Activated CD4-positive, alpha-beta memory T cell treated with anti-CD3 and anti-CD28 coated beads, Interleukin-2, amount 10 ng/mL, durations not matched to agents 7 days and 5 days (primary cell): ENCODE measurements at regions of chr4 and their contacts with region 1.

Region 1: GRCh38 chr4:140071806-140072205 is 82.2 kb downstream of the MAML3 start:
- DNase-seq: peak; percentile 80
- H3K4me3 Mint-ChIP-seq: peak overlapping the region; percentile 34
- H3K27ac Mint-ChIP-seq: peak overlapping the region; percentile 48
- H3K4me1 Mint-ChIP-seq: peaks cover 51% of the 10 kb centered on the region
- H3K27me3 Mint-ChIP-seq: peaks cover 29% of the 10 kb centered on the region

Region 2: DNA sequence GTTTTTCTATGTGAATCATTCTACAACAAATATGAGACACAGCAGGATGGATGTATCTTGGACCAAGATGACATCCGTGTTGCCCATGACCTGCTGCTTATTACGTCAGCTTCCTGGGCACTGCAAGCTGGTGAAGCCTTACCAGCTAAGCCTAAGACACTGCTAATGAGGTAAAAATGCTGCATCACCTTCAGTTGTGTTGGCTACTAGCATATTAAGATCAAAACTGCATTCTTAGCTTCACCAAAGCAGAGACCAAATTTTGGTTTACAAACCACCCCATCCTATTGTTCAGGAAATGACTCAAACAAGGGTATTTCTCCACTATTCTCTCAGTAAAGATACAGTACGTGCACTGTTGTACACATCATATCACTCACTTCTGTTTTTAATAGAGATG is 31.9 kb after region 1 on chr4:
- CTCF ChIA-PET with region 1: interaction called, 5 read pairs
- POLR2A ChIA-PET with region 1: interaction called, 10 read pairs
- DNase-seq: peak; percentile 81
- H3K4me3 Mint-ChIP-seq: peak overlapping the region; percentile 22
- H3K27ac Mint-ChIP-seq: peak overlapping the region; percentile 95
- H3K4me1 Mint-ChIP-seq: peaks cover 74% of the 10 kb centered on the region
- H3K27me3 Mint-ChIP-seq: peaks cover 8% of the 10 kb centered on the region